Transverse colon (tissue), 4 donors: ENCODE measurements at regions of chr17 and their contacts with region 1.

Region 1: DNA sequence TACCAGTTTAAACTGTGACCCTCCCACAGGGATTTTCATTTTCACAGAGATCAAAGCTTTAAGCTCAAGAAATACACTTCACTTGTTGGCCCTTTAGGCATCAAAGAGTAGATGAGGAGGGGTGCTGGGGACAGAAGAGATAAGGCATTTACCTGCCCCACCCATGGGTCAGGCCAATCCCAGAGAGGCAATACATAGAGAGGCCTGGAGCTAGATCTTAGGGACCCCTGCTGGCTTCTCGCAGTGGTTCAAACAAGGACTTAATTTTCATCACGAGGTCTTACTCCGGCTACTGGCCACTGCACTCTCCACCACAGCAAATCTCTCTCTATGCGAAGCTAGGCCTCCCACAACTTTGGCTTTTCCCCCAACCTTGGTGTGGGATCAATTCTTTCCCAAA is 46.6 kb downstream of the NOG start:
- DNase-seq: no peak
- H3K4me3 ChIP-seq: no peak overlapping the region
- H3K27ac ChIP-seq: no peak overlapping the region
- H3K4me1 ChIP-seq: no peaks in the 10 kb centered on the region
- H3K27me3 ChIP-seq: peaks cover 9% of the 10 kb centered on the region
- CTCF ChIP-seq: no peak
- EP300 ChIP-seq: no peak
- POLR2A ChIP-seq: no peak

Region 2: DNA sequence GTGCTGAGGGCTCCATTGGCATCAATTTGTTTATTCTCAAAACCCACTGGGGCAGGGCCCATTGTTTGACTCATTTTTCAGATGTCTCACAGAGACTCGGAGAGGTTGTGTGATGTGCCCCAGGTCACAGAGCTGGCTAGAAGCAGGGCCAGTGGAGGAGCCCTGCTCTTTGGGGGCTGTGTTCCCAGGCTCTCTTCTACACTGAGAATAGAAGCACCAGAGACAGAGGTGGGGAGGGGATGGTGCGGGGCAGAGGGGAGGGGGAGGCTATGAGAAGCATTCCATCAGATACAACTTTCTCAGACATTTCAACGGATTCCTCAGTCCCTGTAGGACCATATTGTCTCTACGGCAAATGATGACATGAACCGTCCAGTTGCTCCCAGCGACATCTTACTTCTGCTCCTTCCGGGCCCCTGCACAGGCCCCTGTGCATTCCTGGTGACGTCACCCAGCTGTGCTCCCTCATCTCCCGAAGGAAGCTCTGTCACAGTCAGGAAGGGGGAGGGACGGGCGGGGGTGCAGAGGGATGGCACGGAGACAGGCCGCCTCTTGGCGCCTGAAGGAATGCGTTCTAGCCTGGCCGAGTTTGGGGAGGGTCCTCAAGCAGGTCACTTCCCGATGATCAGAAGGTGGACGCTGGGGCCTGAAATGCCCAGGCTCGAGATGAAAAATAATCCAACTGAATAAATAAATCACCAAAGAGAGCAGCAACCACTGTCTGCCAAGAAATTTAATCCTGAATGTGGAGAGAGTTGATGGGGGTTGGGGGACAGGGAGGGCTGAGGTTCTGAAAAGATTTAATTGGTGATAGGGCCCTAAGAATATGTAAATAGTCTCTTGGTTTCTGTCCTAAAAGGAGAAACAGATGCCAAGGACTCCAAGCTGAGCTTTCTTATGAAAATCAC is 67.5 kb after region 1 on chr17:
- in situ Hi-C with region 1: no loop called
- intact Hi-C with region 1: loop called (anchors 10 kb)
- DNase-seq: no peak
- H3K4me3 ChIP-seq: no peak overlapping the region
- H3K27ac ChIP-seq: no peak overlapping the region
- H3K4me1 ChIP-seq: peaks cover 0 to 6% (median 0%) of the 10 kb centered on the region in 4 donors
- H3K27me3 ChIP-seq: peaks cover 3% of the 10 kb centered on the region
- CTCF ChIP-seq: no peak
- EP300 ChIP-seq: no peak
- POLR2A ChIP-seq: no peak